Caco-2 (cell line): ENCODE measurements at regions of chr19 and their contacts with region 1.

Region 1: GRCh38 chr19:43463381-43464136 is 1.8 kb downstream of the LYPD3 start:
- DNase-seq: peak; percentile 99
- H3K4me3 ChIP-seq: peak overlapping the region; percentile 64
- H3K4me3 Mint-ChIP-seq: peak overlapping the region; percentile 100
- H3K27ac Mint-ChIP-seq: peak overlapping the region; percentile 95
- H3K4me1 ChIP-seq: 0 out of 2 replicates have a peak, but pooled peaks cover 4% of the 10 kb centered on the region
- H3K4me1 Mint-ChIP-seq: peaks cover 7% of the 10 kb centered on the region
- H3K27me3 ChIP-seq: no peaks in the 10 kb centered on the region
- H3K27me3 Mint-ChIP-seq: no peaks in the 10 kb centered on the region
- CTCF ChIP-seq: no peak

Region 2: GRCh38 chr19:43446746-43447489 is 16.6 kb before region 1 on chr19:
- CTCF ChIA-PET with region 1: interaction called, 32 read pairs
- POLR2A ChIA-PET with region 1: no interaction called
- intact Hi-C with region 1: loop called (anchors 1 kb)
- DNase-seq: peak; percentile 71 to 82
- H3K4me3 ChIP-seq: no peak overlapping the region
- H3K4me3 Mint-ChIP-seq: no peak overlapping the region
- H3K27ac Mint-ChIP-seq: no peak overlapping the region
- H3K4me1 ChIP-seq: no peaks in the 10 kb centered on the region
- H3K4me1 Mint-ChIP-seq: peaks cover 5% of the 10 kb centered on the region
- H3K27me3 ChIP-seq: no peaks in the 10 kb centered on the region
- H3K27me3 Mint-ChIP-seq: peaks cover 2% of the 10 kb centered on the region
- CTCF ChIP-seq: peak; percentile 94 to 98

Region 3: DNA sequence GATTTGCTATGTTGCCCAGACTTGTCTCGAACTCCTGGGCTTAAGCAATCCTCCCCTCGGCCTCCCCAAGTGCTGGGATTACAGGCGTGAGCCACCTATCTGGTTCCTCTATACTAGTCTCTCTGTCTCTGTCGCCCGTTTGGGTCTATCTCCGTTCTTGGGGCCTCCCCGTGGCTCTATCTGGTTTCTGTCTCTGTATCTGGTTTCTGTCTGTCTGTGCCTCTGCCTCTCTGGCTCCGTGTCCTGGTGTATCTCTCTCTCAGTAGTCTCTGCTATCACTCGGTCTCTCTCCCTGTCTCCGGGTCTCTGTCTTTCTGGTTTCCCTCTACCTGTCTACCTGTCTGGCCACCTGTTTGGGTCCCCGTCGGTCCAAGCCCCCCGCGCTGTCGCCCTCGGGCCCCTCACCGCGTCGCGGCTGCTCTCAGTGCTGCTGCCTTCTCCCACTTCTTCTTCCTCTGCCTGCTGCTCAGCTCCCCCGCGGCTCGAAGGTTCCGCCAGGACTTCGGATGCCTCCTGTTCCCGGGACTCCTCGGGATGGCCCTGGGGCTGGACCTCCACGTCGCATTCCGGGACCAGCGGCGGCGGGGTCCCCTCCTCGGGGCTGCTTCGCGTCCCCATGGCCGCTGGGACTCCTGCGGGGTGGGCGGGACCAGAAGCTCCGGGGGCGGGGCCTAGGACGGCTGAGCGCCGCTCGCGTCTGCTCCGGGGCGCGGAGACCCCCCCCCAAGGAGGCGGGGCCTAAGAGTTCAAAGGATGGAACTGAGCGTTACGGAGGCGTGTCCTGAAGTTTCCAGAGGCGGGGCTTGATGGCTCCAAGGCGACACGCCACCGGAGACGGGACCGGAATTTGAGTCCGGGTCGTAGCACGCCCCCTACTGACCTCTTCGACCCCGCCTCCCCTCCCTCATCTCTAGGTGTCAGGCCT is 40.2 kb after region 1 on chr19:
- CTCF ChIA-PET with region 1: interaction called, 11 read pairs
- POLR2A ChIA-PET with region 1: interaction called, 17 read pairs
- intact Hi-C with region 1: loop called (anchors 1 kb)
- DNase-seq: peak; percentile 98 to 99
- H3K4me3 ChIP-seq: peak overlapping the region; percentile 91
- H3K4me3 Mint-ChIP-seq: peak overlapping the region; percentile 90
- H3K27ac Mint-ChIP-seq: peak overlapping the region; percentile 92
- H3K4me1 ChIP-seq: peaks cover 25% of the 10 kb centered on the region
- H3K4me1 Mint-ChIP-seq: peaks cover 33% of the 10 kb centered on the region
- H3K27me3 ChIP-seq: no peaks in the 10 kb centered on the region
- H3K27me3 Mint-ChIP-seq: no peaks in the 10 kb centered on the region
- CTCF ChIP-seq: peak; percentile 49 to 64

Region 4: DNA sequence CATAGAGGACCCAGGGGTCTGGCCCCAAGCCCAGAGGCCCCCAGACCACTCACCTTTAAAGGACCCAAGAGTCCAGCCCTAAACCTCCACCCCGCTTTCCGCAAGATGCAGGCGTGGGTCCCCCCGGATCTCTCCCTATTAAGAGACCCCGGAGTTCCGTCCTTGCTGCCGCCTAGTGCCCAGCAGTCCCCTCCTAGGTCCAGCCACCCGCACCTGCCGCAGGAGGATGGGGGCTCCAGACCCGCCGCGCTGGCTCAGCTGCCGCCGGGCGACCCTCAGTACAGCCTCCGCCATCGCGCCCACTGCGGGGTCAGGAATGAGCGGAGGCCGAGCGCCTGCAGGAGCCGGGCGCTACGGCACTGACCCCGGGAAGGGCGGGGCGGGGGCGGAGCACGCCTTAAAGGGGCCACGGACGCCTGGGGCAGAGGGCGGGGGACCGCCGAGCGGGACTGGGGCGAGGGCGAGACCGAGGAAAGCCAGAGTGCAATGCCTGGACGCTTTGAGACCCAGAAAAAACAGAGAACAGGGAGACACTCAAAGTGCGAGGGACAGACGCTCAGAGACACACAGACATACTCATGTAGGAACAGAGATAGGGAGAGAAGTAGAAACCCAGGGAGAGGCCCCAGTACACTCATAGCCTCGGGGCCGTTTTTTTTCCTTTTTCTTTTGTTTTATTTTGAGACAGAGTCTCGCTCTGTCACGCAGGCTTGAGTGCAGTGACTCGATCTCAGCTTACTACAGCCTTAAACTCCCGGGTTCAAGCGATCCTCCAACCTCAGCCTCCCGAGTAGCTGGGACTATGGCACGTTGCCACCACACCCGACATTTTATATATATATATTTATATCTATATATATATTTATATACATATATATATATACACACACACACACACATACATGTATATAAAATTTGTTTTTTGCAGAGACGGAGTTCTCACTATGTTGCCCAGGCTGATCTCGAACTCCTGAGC is 63.6 kb after region 1 on chr19 and contains the start of gene ETHE1:
- CTCF ChIA-PET with region 1: interaction called, 4 read pairs
- POLR2A ChIA-PET with region 1: no interaction called
- intact Hi-C with region 1: loop called (anchors 5 kb)
- DNase-seq: peak; percentile 88 to 91
- H3K4me3 ChIP-seq: peak within 1 kb of the TSS; percentile 85
- H3K4me3 Mint-ChIP-seq: peak within 1 kb of the TSS; percentile 98
- H3K27ac Mint-ChIP-seq: peak within 1 kb of the TSS; percentile 93
- H3K4me1 ChIP-seq: peaks cover 17% of the 10 kb centered on the region
- H3K4me1 Mint-ChIP-seq: peaks cover 22% of the 10 kb centered on the region
- H3K27me3 ChIP-seq: no peaks in the 10 kb centered on the region
- H3K27me3 Mint-ChIP-seq: no peaks in the 10 kb centered on the region
- CTCF ChIP-seq: no peak
- total RNA-seq, gene ETHE1: 39.6 and 42.5 TPM in 2 replicates

Region 5: GRCh38 chr19:43555185-43555770 is 91.7 kb after region 1 on chr19:
- CTCF ChIA-PET with region 1: interaction called, 10 read pairs
- POLR2A ChIA-PET with region 1: no interaction called
- intact Hi-C with region 1: no loop called
- DNase-seq: peak; percentile 72 to 84
- H3K4me3 ChIP-seq: no peak overlapping the region
- H3K4me3 Mint-ChIP-seq: no peak overlapping the region
- H3K27ac Mint-ChIP-seq: no peak overlapping the region
- H3K4me1 ChIP-seq: no peaks in the 10 kb centered on the region
- H3K4me1 Mint-ChIP-seq: no peaks in the 10 kb centered on the region
- H3K27me3 ChIP-seq: no peaks in the 10 kb centered on the region
- H3K27me3 Mint-ChIP-seq: no peaks in the 10 kb centered on the region
- CTCF ChIP-seq: peak; percentile 79 to 90